Activated B cell treated with CpG ODN at 0.5 μM for 24 hours (primary cell): ENCODE measurements at regions of chr21 and their contacts with region 1.

Region 1: GRCh38 chr21:24995216-24995615 is 612.1 kb downstream of the MRPL39 start:
- DNase-seq: no peak
- ATAC-seq: no peak
- H3K4me3 Mint-ChIP-seq: no peak overlapping the region
- H3K27ac Mint-ChIP-seq: no peak overlapping the region
- H3K4me1 Mint-ChIP-seq: no peaks in the 10 kb centered on the region
- H3K27me3 Mint-ChIP-seq: no peaks in the 10 kb centered on the region
- CTCF ChIP-seq: no peak

Region 2: DNA sequence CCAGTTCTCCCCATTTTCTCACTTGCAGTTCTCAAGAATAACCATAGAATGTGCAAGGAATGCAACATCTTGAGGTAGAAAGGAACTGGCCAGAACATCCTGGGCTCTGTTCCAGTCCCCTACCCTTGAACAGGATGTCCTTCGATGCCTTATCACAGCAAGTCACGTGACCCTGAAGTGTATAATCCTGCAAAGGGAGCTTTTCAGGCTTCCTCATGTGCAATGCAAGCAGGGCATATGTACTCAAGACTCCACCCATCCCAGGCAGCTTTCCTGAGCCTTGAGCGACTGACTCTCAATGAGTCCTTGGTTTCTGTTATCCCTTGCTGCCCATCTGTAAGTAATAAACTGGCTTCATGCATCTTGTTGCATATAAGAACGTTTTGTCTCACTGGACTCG is 301.0 kb after region 1 on chr21:
- CTCF ChIA-PET with region 1: no interaction called
- POLR2A ChIA-PET with region 1: no interaction called
- intact Hi-C with region 1: no loop called
- DNase-seq: no peak
- ATAC-seq: no peak
- H3K4me3 Mint-ChIP-seq: no peak overlapping the region
- H3K27ac Mint-ChIP-seq: no peak overlapping the region
- H3K4me1 Mint-ChIP-seq: peaks cover 54% of the 10 kb centered on the region
- H3K27me3 Mint-ChIP-seq: no peaks in the 10 kb centered on the region
- CTCF ChIP-seq: no peak

Region 3: GRCh38 chr21:25582888-25583287 is 587.7 kb after region 1 on chr21:
- CTCF ChIA-PET with region 1: no interaction called
- POLR2A ChIA-PET with region 1: no interaction called
- intact Hi-C with region 1: no loop called
- DNase-seq: no peak
- ATAC-seq: peak; percentile 13
- H3K4me3 Mint-ChIP-seq: no peak overlapping the region
- H3K27ac Mint-ChIP-seq: peak overlapping the region; percentile 76
- H3K4me1 Mint-ChIP-seq: peaks cover 40% of the 10 kb centered on the region
- H3K27me3 Mint-ChIP-seq: no peaks in the 10 kb centered on the region
- CTCF ChIP-seq: no peak

Region 4: DNA sequence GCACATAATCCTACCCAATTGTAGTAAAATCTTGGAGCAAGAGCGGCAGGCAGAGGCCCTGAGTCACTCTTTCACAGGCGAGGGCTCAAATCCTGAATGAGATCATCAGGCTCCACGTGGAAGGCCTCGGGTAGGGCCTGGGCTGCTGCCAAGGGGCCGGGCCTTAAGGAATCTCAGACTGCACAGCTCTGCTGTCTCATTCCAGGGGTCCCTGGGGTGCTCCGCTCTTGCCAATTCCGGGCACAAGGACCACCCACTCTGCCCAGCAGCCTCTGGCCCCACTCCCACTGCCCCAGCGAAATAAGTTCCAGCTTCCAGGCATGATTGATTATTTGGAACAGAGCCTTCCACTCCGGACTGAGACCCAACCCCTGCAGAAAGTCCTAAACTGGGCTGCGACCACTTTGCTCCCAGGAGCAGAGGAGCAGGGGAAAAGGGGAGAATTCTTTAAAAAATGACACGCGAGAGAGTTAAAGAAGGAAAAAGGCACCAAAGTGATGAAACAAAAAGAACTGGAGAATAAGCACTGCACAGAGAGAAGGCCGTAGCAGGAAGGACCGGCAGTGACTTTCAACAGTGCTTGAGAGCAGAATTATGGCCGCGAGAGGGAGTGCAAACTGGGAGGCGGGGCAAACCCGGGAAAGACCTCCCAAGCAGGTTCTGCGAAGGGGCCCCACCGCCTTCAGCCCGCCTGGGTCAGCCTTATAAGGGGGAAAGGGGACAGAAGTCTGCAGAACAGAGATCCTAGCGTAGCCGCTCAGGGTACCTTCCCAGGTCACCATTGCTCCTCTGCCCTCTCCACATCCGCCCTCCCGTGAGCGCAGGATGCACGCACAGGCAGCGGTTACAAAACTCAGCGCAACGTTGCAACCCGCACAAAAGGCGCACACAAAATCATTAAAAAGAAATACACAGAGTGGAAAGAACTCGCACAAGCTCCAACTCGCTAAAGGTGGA is 1848.0 kb after region 1 on chr21:
- CTCF ChIA-PET with region 1: no interaction called
- POLR2A ChIA-PET with region 1: no interaction called
- intact Hi-C with region 1: loop called (anchors 10 kb)
- DNase-seq: no peak
- ATAC-seq: no peak
- H3K4me3 Mint-ChIP-seq: peak overlapping the region; percentile 33
- H3K27ac Mint-ChIP-seq: no peak overlapping the region
- H3K4me1 Mint-ChIP-seq: peaks cover 36% of the 10 kb centered on the region
- H3K27me3 Mint-ChIP-seq: peaks cover 44% of the 10 kb centered on the region
- CTCF ChIP-seq: no peak